Activated naive CD4-positive, alpha-beta T cell treated with anti-CD3 and anti-CD28 coated beads for 36 hours (primary cell): ENCODE measurements at regions of chr10 and their contacts with region 1.

Region 1: GRCh38 chr10:131905603-131906272 is 4.9 kb downstream of the PPP2R2D start:
- DNase-seq: peak; percentile 68
- H3K4me3 Mint-ChIP-seq: peak overlapping the region; percentile 16
- H3K27ac Mint-ChIP-seq: peak overlapping the region; percentile 92
- H3K4me1 Mint-ChIP-seq: peaks cover 76% of the 10 kb centered on the region
- H3K27me3 Mint-ChIP-seq: no peaks in the 10 kb centered on the region

Region 2: DNA sequence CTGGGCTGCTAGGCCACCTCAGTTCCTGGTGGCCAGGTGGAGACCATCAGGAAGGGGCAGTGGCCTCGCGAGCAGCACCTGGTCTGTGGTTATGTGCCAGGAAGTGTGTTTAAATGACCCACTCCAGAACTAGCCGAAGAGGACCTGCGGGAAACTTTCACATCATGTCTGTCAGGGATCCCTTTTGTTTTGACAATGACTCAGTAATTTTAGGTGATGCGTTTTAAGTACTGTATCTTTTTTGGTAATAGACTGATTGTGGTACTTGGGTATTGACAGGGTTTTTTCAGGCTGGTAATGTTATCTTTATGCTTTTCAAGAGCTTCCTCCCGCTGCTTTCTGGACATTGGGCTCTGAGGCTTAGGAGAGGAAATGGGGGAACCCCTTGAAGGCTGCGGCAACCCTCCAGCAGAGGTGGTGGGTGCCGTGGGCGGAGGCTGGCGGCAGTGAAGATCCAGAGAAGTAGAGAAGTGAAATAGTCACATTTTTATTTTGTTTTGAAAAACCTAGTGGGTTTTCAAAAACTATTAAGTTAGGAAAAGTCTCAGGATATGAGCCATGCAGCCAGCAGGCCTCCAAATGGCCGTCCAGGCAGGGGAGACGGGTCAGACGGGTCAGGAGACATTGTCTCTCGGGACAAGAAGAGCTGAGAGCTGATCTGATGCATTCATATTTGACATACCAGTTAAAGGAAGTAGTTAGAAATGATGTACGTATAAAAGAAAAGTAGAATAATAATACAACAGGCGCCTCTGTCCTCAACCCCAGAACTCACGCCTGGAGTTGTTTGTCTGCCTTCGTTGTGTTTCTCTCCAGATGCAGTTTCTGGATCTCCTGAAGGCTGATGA is 22.7 kb after region 1 on chr10:
- CTCF ChIA-PET with region 1: interaction called, 5 read pairs
- intact Hi-C with region 1: loop called (anchors 1 kb)
- DNase-seq: peak; percentile 75
- H3K4me3 Mint-ChIP-seq: peak overlapping the region; percentile 60
- H3K27ac Mint-ChIP-seq: peak overlapping the region; percentile 91
- H3K4me1 Mint-ChIP-seq: peaks cover 79% of the 10 kb centered on the region
- H3K27me3 Mint-ChIP-seq: no peaks in the 10 kb centered on the region

Region 3: GRCh38 chr10:131972474-131973071 is 66.8 kb after region 1 on chr10:
- CTCF ChIA-PET with region 1: no interaction called
- intact Hi-C with region 1: loop called (anchors 2 kb)
- DNase-seq: peak; percentile 63
- H3K4me3 Mint-ChIP-seq: peak overlapping the region; percentile 46
- H3K27ac Mint-ChIP-seq: peak overlapping the region; percentile 88
- H3K4me1 Mint-ChIP-seq: peaks cover 64% of the 10 kb centered on the region
- H3K27me3 Mint-ChIP-seq: no peaks in the 10 kb centered on the region

Region 4: GRCh38 chr10:132421392-132421877 is 515.7 kb after region 1 on chr10:
- CTCF ChIA-PET with region 1: no interaction called
- intact Hi-C with region 1: no loop called
- DNase-seq: peak; percentile 52
- H3K4me3 Mint-ChIP-seq: no peak overlapping the region
- H3K27ac Mint-ChIP-seq: peak overlapping the region; percentile 24
- H3K4me1 Mint-ChIP-seq: peaks cover 22% of the 10 kb centered on the region
- H3K27me3 Mint-ChIP-seq: no peaks in the 10 kb centered on the region